Gastrocnemius medialis (tissue), 4 donors: ENCODE measurements at regions of chr9 and their contacts with region 1.

Region 1: GRCh38 chr9:79408617-79409016 is 163.1 kb upstream of the TLE4 start:
- DNase-seq: no peak
- ATAC-seq: no peak
- H3K4me3 ChIP-seq: no peak overlapping the region
- H3K27ac ChIP-seq: no peak overlapping the region
- H3K4me1 ChIP-seq: no peaks in the 10 kb centered on the region
- H3K27me3 ChIP-seq: no peaks in the 10 kb centered on the region
- CTCF ChIP-seq: no peak
- POLR2A ChIP-seq: no peak

Region 2: GRCh38 chr9:79799691-79800335 is 391.2 kb after region 1 on chr9:
- in situ Hi-C with region 1: loop called in 1 of 4 experiments (anchors 25 kb)
- intact Hi-C with region 1: no loop called
- DNase-seq: no peak
- ATAC-seq: no peak
- H3K4me3 ChIP-seq: no peak overlapping the region
- H3K27ac ChIP-seq: no peak overlapping the region
- H3K4me1 ChIP-seq: no peaks in the 10 kb centered on the region
- H3K27me3 ChIP-seq: no peaks in the 10 kb centered on the region
- CTCF ChIP-seq: no peak
- POLR2A ChIP-seq: no peak